Lower lobe of right lung (tissue), 2 donors: ENCODE measurements at regions of chrX and their contacts with region 1.

Region 1: DNA sequence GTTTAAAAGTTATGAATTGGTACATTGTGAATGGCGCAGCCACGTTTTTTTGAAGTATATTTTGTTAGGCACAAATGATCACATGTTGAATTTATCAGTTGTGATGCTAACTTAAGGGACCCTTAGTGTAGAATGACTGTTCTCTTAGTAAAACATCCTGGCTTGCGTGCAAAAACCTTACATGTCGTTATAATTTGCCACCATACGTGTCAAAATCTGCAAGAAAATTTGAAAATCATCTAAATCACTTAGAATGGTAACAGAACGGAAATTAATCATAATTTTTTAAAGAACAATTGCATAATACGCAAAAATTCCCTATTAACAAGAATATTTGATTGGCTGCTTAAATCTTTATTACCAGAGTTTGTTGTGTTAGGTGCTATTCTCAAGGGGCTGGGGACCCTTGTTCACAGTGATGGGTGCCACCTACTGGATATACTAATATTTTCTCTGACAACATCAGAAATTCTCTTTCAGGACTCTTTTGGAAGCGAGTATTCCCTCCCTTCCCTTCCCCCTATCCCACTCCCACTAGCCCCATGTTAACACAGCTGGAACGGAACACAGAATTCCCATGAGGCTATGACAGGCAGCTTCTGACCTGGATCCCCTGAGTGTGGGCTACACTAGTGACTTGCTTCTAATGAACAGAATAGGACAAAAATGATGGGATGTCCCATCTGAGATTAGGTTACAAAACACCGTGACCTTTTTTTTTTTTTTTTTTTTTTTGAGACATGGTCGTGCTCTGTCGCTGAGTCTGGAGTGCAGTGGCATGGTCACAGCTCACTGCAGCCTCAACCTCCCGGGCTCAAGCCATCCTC is 71.8 kb downstream of the SUPT20HL2 start:
- DNase-seq: no peak
- ATAC-seq: peak; percentile 51 to 72
- H3K4me3 ChIP-seq: no peak overlapping the region
- H3K27ac ChIP-seq: no peak overlapping the region
- H3K4me1 ChIP-seq: no peaks in the 10 kb centered on the region
- H3K27me3 ChIP-seq: no peaks in the 10 kb centered on the region
- CTCF ChIP-seq: peak; percentile 33

Region 2: DNA sequence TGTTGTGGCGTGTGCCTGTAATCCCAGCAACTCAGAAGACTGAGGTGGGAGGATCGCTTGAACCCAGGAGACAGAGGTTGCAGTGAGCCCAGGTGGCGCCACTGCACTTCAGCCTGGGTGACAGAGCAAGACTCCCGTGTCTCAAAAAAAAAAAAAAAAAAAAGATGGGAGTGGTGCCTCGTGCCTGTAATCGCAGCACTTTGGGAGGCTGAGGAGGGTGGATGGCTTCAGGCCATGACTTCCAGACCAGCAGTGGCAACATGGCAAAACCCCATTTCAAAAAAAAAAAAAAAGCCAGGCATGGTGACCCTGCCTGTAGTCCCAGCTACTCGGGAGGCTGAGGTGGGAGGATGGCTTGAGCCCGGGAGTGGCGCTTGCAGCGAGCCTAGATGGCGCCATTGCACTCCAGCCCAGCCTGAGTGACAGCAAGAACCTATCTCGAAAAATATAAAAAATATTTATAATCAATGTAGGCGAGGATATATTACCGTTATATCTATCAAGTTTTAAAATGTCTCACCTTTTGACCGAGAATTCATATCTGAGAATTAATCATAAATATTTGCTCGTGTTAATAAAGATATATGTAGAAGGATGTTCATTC is 160.3 kb before region 1 on chrX:
- intact Hi-C with region 1: loop called (anchors 5 kb)
- DNase-seq: peak; percentile 55
- ATAC-seq: peak; percentile 60 to 83
- H3K4me3 ChIP-seq: no peak overlapping the region
- H3K27ac ChIP-seq: no peak overlapping the region
- H3K4me1 ChIP-seq: no peaks in the 10 kb centered on the region
- H3K27me3 ChIP-seq: no peaks in the 10 kb centered on the region
- CTCF ChIP-seq: peak; percentile 46